CD4-positive, alpha-beta T cell (primary cell): ENCODE measurements at regions of chr12 and their contacts with region 1.

Region 1: GRCh38 chr12:68807576-68808387 is at the start of gene MDM2:
- DNase-seq: peak; percentile 92 to 99 (median 96)
- ATAC-seq: peak; percentile 91
- H3K4me3 ChIP-seq: peak within 1 kb of the TSS; percentile 95
- H3K4me3 Mint-ChIP-seq: peak within 1 kb of the TSS; percentile 94
- H3K27ac ChIP-seq: peak within 1 kb of the TSS; percentile 92
- H3K27ac Mint-ChIP-seq: peak within 1 kb of the TSS; percentile 100
- H3K4me1 ChIP-seq: peaks cover 17% of the 10 kb centered on the region
- H3K4me1 Mint-ChIP-seq: peaks cover 34% of the 10 kb centered on the region
- H3K27me3 ChIP-seq: no peaks in the 10 kb centered on the region
- H3K27me3 Mint-ChIP-seq: no peaks in the 10 kb centered on the region
- CTCF ChIP-seq: peak; percentile 68
- total RNA-seq, gene MDM2: 90.8 TPM

Region 2: GRCh38 chr12:68358532-68359485 is 449.0 kb before region 1 on chr12:
- CTCF ChIA-PET with region 1: no interaction called
- POLR2A ChIA-PET with region 1: no interaction called
- intact Hi-C with region 1: loop called (anchors 5 to 10 kb)
- DNase-seq: peak; percentile 36 to 84 (median 55)
- ATAC-seq: peak; percentile 92
- H3K4me3 ChIP-seq: no peak overlapping the region
- H3K4me3 Mint-ChIP-seq: no peak overlapping the region
- H3K27ac ChIP-seq: no peak overlapping the region
- H3K27ac Mint-ChIP-seq: peak overlapping the region; percentile 67
- H3K4me1 ChIP-seq: peaks cover 21% of the 10 kb centered on the region
- H3K4me1 Mint-ChIP-seq: peaks cover 29% of the 10 kb centered on the region
- H3K27me3 ChIP-seq: no peaks in the 10 kb centered on the region
- H3K27me3 Mint-ChIP-seq: no peaks in the 10 kb centered on the region
- CTCF ChIP-seq: peak; percentile 72

Region 3: GRCh38 chr12:68675101-68675842 is 132.5 kb before region 1 on chr12:
- CTCF ChIA-PET with region 1: no interaction called
- POLR2A ChIA-PET with region 1: interaction called, 17 read pairs
- intact Hi-C with region 1: loop called in 1 of 2 experiments (anchors 5 kb)
- DNase-seq: peak; percentile 37 to 91 (median 75)
- ATAC-seq: peak; percentile 98
- H3K4me3 ChIP-seq: peak overlapping the region; percentile 2
- H3K4me3 Mint-ChIP-seq: peak overlapping the region; percentile 60
- H3K27ac ChIP-seq: peak overlapping the region; percentile 26 to 45
- H3K27ac Mint-ChIP-seq: peak overlapping the region; percentile 77
- H3K4me1 ChIP-seq: peaks cover 29% of the 10 kb centered on the region
- H3K4me1 Mint-ChIP-seq: peaks cover 59% of the 10 kb centered on the region
- H3K27me3 ChIP-seq: no peaks in the 10 kb centered on the region
- H3K27me3 Mint-ChIP-seq: no peaks in the 10 kb centered on the region
- CTCF ChIP-seq: no peak

Region 4: DNA sequence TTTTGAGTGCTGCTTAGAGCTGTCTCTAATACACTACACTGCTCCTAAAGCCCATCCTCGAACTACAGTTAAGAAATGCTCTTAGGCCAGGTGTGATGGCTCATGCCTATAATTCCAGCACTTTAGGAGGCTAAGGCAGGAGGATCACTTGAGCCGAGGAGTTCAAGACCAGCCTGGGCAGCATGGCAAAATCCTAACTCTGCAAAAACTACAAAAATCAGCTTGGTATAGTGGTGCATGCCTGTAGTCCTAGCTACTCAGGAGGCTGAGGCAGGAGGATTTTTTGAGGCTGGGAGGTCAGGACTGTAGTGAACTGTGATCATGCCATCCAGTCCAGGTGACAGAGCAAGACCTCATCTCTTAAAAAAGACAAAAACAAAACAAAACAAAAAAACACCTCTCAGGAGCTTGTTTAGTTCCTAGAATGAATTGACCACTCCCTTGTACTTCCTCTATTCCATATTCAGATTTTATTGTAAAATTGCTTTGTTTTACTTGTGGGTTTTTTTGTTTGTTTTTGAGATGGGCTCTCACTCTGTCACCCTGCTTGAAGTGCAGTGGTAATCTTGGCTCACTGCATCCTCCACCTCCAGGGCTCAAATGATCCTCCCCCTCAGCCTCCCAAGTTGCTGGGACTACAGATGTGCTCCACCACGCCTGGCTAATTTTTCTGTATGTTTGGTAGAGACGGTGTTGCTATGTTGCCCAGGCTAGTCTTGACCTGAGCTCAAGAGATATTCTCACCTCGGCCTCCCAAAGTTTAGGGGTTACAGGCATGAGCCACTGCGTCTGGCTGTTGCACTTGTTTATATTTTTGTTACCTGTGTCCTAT is 13.8 kb after region 1 on chr12:
- CTCF ChIA-PET with region 1: interaction called, 23 read pairs
- POLR2A ChIA-PET with region 1: interaction called, 18 read pairs
- intact Hi-C with region 1: no loop called
- DNase-seq: no peak
- ATAC-seq: no peak
- H3K4me3 ChIP-seq: no peak overlapping the region
- H3K4me3 Mint-ChIP-seq: no peak overlapping the region
- H3K27ac ChIP-seq: no peak overlapping the region
- H3K27ac Mint-ChIP-seq: peak overlapping the region; percentile 36
- H3K4me1 ChIP-seq: peaks cover 7% of the 10 kb centered on the region
- H3K4me1 Mint-ChIP-seq: peaks cover 34% of the 10 kb centered on the region
- H3K27me3 ChIP-seq: no peaks in the 10 kb centered on the region
- H3K27me3 Mint-ChIP-seq: no peaks in the 10 kb centered on the region
- CTCF ChIP-seq: no peak

Region 5: GRCh38 chr12:69330475-69331473 is 523.0 kb after region 1 on chr12:
- CTCF ChIA-PET with region 1: no interaction called
- POLR2A ChIA-PET with region 1: interaction called, 11 read pairs
- intact Hi-C with region 1: no loop called
- DNase-seq: peak; percentile 49 to 81 (median 66)
- ATAC-seq: peak; percentile 74
- H3K4me3 ChIP-seq: peak overlapping the region; percentile 61
- H3K4me3 Mint-ChIP-seq: peak overlapping the region; percentile 98
- H3K27ac ChIP-seq: peak overlapping the region; percentile 83 to 88
- H3K27ac Mint-ChIP-seq: peak overlapping the region; percentile 100
- H3K4me1 ChIP-seq: peaks cover 34% of the 10 kb centered on the region
- H3K4me1 Mint-ChIP-seq: peaks cover 62% of the 10 kb centered on the region
- H3K27me3 ChIP-seq: no peaks in the 10 kb centered on the region
- H3K27me3 Mint-ChIP-seq: no peaks in the 10 kb centered on the region
- CTCF ChIP-seq: no peak